Activated naive CD4-positive, alpha-beta T cell treated with anti-CD3 and anti-CD28 coated beads, Interleukin-2, amount 10 ng/mL, durations not matched to agents 7 days and 5 days (primary cell): ENCODE measurements at regions of chr2 and their contacts with region 1.

Region 1: GRCh38 chr2:96024336-96025193 is 10.2 kb downstream of the GPAT2 start:
- DNase-seq: no peak
- H3K4me3 Mint-ChIP-seq: no peak overlapping the region
- H3K27ac Mint-ChIP-seq: no peak overlapping the region
- H3K4me1 Mint-ChIP-seq: peaks cover 3% of the 10 kb centered on the region
- H3K27me3 Mint-ChIP-seq: no peaks in the 10 kb centered on the region

Region 2: DNA sequence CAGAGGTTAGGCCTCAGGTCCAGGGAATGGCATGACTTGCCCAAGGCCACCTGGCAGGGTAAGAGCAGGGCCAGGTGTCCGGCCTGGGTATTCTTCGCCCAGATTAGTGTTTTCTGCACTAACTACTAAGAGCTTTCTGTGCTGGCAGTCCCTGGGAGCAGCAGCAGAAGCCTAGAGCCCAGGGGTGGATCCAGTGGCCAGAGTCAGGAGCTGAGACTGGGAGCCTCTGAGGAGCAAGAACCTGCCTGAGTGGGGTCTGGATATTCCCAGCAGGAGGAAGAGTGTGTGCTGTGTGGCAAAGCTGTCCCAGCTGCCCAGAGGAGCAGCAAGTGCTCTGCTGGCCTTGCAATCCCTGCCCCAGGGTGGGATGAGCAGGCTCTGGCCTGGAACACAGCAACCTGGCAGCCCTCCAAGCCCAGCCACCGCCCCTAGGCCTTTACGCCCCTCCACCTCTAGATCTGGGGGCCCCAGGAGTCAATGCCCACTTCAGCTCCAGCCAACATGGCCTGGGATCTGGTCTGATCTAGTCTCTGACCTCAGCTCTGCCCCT is 40.9 kb after region 1 on chr2:
- CTCF ChIA-PET with region 1: no interaction called
- DNase-seq: no peak
- H3K4me3 Mint-ChIP-seq: no peak overlapping the region
- H3K27ac Mint-ChIP-seq: no peak overlapping the region
- H3K4me1 Mint-ChIP-seq: peaks cover 6% of the 10 kb centered on the region
- H3K27me3 Mint-ChIP-seq: peaks cover 8% of the 10 kb centered on the region

Region 3: DNA sequence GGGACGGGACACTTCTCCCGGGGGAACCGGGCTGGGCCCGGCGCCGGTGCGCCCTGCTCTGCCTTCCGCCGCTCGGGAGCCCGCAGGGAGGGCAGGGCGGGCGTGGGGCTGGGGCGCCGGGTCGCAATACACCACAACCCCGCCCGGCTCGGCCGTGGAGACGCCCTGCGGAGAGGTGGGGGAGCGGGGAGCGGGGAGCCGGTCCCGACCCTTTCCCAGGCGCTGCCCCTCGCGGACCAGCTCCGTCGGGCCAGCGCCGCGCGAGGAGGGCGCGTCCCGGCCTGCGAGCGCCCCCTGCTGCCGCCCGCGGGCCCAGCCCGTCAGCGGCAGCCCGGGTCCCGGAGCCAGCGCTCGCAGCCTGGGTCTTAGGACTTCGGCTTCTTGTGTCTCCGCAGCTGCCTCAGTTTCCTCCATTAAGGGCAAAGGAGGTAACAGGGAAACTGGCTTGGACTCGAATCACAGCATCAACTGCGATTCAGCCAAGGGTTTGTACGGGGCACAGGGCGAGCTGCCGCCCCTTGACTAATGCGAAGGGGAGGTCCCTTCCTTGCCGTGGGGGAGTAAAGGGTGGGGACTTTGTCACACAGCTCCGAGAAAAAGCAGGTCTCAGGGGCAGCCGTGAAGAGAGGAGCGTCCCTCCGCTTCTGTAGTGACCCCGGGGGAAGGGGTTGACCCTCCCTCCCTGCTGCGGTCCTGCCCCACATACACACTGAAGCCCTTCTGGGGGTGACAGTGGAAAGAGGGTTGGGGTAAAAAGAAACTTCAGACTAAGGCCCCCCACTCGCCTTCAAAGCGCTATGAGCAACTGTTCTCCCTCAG is 92.5 kb after region 1 on chr2:
- CTCF ChIA-PET with region 1: interaction called, 29 read pairs
- DNase-seq: peak; percentile 65
- H3K4me3 Mint-ChIP-seq: peak overlapping the region; percentile 63
- H3K27ac Mint-ChIP-seq: no peak overlapping the region
- H3K4me1 Mint-ChIP-seq: peaks cover 15% of the 10 kb centered on the region
- H3K27me3 Mint-ChIP-seq: peaks cover 88% of the 10 kb centered on the region

Region 4: GRCh38 chr2:96208143-96209010 is 183.8 kb after region 1 on chr2 and contains the start of gene STARD7:
- CTCF ChIA-PET with region 1: no interaction called
- DNase-seq: peak; percentile 98
- H3K4me3 Mint-ChIP-seq: peak within 1 kb of the TSS; percentile 89
- H3K27ac Mint-ChIP-seq: peak within 1 kb of the TSS; percentile 92
- H3K4me1 Mint-ChIP-seq: peaks cover 55% of the 10 kb centered on the region
- H3K27me3 Mint-ChIP-seq: no peaks in the 10 kb centered on the region